ENCODE measurements at regions of chr15 and their contacts with region 1.

Region 1: GRCh38 chr15:82985688-82986441 is at the start of gene RAMAC:
- DNase-seq: peak; percentile 92
- ATAC-seq: peak; percentile 95
- H3K4me3 ChIP-seq: peak within 1 kb of the TSS; percentile 96
- H3K27ac ChIP-seq: peak within 1 kb of the TSS; percentile 44
- H3K4me1 ChIP-seq: peaks cover 14% of the 10 kb centered on the region
- H3K27me3 ChIP-seq: no peaks in the 10 kb centered on the region
- CTCF ChIP-seq: no peak
- total RNA-seq, gene RAMAC: 33.6 and 43.8 TPM in 2 replicates

Region 2: DNA sequence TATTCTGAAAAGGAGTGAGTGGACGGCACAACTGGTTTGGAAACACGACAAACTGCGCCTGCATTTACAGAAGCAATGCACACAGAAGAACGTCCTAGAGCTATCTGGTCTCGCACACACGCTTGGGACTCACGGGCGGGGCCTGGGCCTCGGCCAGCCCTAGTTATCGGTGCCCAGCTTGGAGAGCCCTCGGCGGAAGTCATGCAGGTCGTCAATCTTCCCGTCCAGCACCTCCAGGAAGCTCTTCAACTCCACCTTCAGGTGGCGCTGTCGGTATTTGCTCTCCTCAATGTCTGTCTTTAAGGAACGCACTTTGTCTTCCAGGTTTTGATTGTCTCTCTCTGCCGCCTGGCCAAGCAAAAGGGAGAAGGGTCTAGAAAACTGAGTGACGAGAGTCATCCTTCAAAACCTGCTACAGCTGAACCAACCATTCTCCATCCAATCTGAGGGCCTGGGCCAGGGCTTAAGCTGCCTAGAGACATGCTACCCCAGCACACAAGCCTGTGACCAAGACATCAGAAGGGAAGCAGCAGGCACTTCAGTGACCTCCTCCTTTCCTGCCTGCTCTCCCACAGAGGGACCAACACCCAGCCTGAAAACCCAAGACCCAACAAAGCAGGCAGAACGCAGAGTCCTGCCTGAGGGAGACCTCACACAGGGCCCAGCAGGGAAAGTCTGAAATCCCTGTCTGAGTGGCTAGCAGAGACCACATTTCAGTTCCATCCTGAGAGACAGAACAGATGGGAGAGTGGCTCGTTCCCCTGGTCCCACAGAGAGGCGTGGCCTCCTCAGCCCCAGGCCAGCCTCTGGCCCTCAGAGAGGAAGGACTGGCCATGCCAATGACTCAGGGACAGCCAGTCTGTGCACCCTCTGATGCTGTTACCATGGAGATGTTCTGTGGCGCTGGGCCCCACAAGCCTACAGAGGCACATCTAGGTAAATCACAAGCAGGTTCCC is 136.0 kb before region 1 on chr15:
- CTCF ChIA-PET with region 1: no interaction called
- POLR2A ChIA-PET with region 1: no interaction called
- intact Hi-C with region 1: loop called (anchors 5 kb)
- DNase-seq: peak; percentile 86
- ATAC-seq: peak; percentile 83
- H3K4me3 ChIP-seq: no peak overlapping the region
- H3K27ac ChIP-seq: no peak overlapping the region
- H3K4me1 ChIP-seq: peaks cover 6% of the 10 kb centered on the region; the same call in 1 of the 2 replicates
- H3K27me3 ChIP-seq: no peaks in the 10 kb centered on the region
- CTCF ChIP-seq: peak; percentile 90

Region 3: GRCh38 chr15:82919231-82919886 is 66.5 kb before region 1 on chr15:
- CTCF ChIA-PET with region 1: no interaction called
- POLR2A ChIA-PET with region 1: no interaction called
- intact Hi-C with region 1: loop called (anchors 5 kb)
- DNase-seq: peak; percentile 53
- ATAC-seq: peak; percentile 78
- H3K4me3 ChIP-seq: no peak overlapping the region
- H3K27ac ChIP-seq: no peak overlapping the region
- H3K4me1 ChIP-seq: no peaks in the 10 kb centered on the region; the same call in 1 of the 2 replicates
- H3K27me3 ChIP-seq: no peaks in the 10 kb centered on the region
- CTCF ChIP-seq: no peak

Region 4: GRCh38 chr15:82999905-83000671 is 14.2 kb after region 1 on chr15:
- CTCF ChIA-PET with region 1: no interaction called
- POLR2A ChIA-PET with region 1: no interaction called
- intact Hi-C with region 1: no loop called
- DNase-seq: peak; percentile 75
- ATAC-seq: peak; percentile 81
- H3K4me3 ChIP-seq: peak overlapping the region; percentile 56
- H3K27ac ChIP-seq: no peak overlapping the region
- H3K4me1 ChIP-seq: no peaks in the 10 kb centered on the region
- H3K27me3 ChIP-seq: no peaks in the 10 kb centered on the region
- CTCF ChIP-seq: peak; percentile 79

Measured in PC-3 (cell line).